PC-9 (cell line): ENCODE measurements at regions of chr7 and their contacts with region 1.

Region 1: GRCh38 chr7:44999245-45000095 is 531 bp upstream of the CCM2 start:
- DNase-seq: peak; percentile 98 to 100
- H3K4me3 ChIP-seq: peak overlapping the region; percentile 98
- H3K27ac ChIP-seq: peak overlapping the region; percentile 66
- H3K4me1 ChIP-seq: peaks cover 37% of the 10 kb centered on the region
- H3K27me3 ChIP-seq: no peaks in the 10 kb centered on the region
- CTCF ChIP-seq: no peak

Region 2: DNA sequence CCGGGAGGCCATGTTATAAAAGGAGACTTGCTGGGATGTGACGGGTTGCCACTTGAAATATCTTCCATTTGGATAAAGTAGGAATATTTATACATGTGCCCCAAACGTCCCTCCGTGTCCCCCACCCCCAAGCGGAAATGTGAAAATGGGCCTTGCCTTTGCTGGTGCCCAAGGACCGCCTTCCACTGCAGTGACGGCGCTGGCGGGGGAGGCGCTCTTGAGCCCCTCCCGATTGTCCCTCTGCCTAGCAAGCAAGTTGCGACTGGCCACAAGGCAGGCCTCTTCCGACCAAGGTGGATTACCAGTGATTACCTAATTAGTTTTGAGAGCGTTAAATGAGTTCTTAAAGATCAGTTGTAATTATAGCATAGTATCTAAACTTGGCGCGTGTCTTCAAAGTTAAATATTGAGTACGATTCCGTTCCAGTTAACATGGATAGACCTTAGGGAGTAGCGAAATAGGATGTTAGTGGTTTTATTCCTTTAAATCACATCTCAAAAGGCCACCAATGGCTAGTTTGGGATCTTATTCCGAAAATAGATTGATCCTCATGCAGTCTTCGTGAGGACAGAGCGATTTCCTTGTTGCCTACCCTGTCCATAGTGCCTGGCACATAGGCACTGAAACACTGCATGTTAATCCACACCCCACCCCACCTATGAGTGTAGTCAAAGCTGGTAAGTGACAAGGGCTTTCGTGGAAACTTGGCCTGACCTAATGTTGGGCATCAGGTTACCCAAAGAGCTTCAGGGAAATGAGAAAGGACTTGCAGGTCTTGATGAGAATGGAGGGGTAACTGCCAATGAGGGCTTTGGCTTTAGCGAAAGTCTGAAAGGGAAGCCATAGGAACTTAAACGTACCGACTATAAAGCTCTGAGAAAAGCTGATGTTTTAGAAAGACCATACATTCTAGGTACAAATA is 201.9 kb before region 1 on chr7:
- CTCF ChIA-PET with region 1: no interaction called
- POLR2A ChIA-PET with region 1: interaction called, 10 read pairs
- intact Hi-C with region 1: no loop called
- DNase-seq: peak; percentile 87
- H3K4me3 ChIP-seq: peak overlapping the region; percentile 67
- H3K27ac ChIP-seq: peak overlapping the region; percentile 93
- H3K4me1 ChIP-seq: peaks cover 26% of the 10 kb centered on the region
- H3K27me3 ChIP-seq: no peaks in the 10 kb centered on the region
- CTCF ChIP-seq: peak; percentile 79; the same call in 1 of the 2 replicates

Region 3: DNA sequence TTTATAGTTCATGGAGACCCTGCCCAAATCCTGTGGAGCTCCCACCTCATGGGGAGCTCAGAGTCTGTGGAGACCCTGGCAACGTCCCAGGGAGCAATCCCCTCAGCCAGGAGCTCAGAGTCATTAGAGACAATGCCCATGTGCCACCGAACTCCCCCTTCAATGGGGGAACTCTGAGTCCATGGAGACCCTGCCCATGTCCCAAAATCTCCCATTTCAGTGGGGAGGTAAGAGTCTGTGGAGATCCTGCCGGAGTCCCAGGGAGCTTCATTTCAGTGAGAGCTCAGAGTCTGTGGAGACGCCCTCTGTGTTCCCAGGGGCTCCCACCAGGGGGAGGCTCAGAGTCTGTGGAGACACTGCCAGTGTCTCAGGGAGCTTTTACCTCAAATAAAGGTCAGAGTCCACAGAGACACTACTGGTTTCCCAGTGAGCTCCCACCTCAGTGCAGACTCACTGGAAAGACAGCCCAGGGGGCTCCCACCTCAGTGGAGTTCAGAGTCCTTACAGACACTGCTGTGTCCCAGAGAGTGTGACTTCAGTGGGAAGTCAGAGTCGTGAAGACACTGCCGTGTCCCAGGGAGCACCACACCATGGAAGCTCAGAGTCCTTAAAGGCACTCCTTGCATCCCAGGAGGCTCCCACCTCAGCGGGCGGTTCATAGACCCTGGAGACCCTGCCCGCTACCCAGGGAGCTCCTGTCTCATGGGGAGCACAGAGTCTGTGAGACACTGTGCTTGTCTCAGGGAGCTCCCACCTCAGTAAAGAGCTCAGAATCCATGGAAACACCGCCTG is 25.7 kb before region 1 on chr7:
- CTCF ChIA-PET with region 1: interaction called, 13 read pairs
- POLR2A ChIA-PET with region 1: interaction called, 4 read pairs
- intact Hi-C with region 1: no loop called
- DNase-seq: peak in 1 of 2 experiments; percentile 50
- H3K4me3 ChIP-seq: no peak overlapping the region
- H3K27ac ChIP-seq: no peak overlapping the region
- H3K4me1 ChIP-seq: no peaks in the 10 kb centered on the region
- H3K27me3 ChIP-seq: no peaks in the 10 kb centered on the region
- CTCF ChIP-seq: peak; percentile 66

Region 4: DNA sequence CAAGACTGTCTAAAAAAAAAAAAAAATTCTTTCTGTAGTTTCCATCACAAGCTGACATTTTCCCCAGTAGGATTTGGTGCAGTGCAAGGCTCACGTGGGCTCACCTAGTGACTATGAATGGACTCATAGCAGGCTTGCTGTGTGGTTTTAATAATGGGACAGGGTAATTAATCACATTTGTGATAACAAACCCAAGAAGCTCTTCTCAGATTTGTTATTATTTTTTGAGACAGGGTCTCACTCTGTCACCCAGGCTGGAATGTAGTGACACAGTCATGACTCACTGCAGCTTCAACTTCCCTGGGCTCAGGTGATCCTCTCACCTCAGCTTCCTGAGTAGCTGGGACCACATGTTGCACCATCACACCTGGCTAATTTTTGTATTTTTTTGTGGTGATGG is 49.3 kb after region 1 on chr7:
- CTCF ChIA-PET with region 1: no interaction called
- POLR2A ChIA-PET with region 1: interaction called, 9 read pairs
- intact Hi-C with region 1: loop called (anchors 2 kb)
- DNase-seq: peak; percentile 68 to 98
- H3K4me3 ChIP-seq: no peak overlapping the region
- H3K27ac ChIP-seq: peak overlapping the region; percentile 79
- H3K4me1 ChIP-seq: peaks cover 28% of the 10 kb centered on the region
- H3K27me3 ChIP-seq: no peaks in the 10 kb centered on the region
- CTCF ChIP-seq: no peak

Region 5: GRCh38 chr7:45174966-45175765 is 175.7 kb after region 1 on chr7:
- CTCF ChIA-PET with region 1: no interaction called
- POLR2A ChIA-PET with region 1: no interaction called
- intact Hi-C with region 1: no loop called
- DNase-seq: no peak
- H3K4me3 ChIP-seq: no peak overlapping the region
- H3K27ac ChIP-seq: no peak overlapping the region
- H3K4me1 ChIP-seq: no peaks in the 10 kb centered on the region
- H3K27me3 ChIP-seq: peaks cover 81% of the 10 kb centered on the region
- CTCF ChIP-seq: no peak

Region 6: GRCh38 chr7:46145412-46145811 is 1145.9 kb after region 1 on chr7:
- CTCF ChIA-PET with region 1: no interaction called
- POLR2A ChIA-PET with region 1: interaction called, 22 read pairs
- intact Hi-C with region 1: no loop called
- DNase-seq: peak; percentile 89 to 99
- H3K4me3 ChIP-seq: no peak overlapping the region
- H3K27ac ChIP-seq: peak overlapping the region; percentile 80
- H3K4me1 ChIP-seq: peaks cover 29% of the 10 kb centered on the region
- H3K27me3 ChIP-seq: no peaks in the 10 kb centered on the region
- CTCF ChIP-seq: no peak